Posterior vena cava (tissue), 2 donors: ENCODE measurements at regions of chr1 and their contacts with region 1.

Region 1: GRCh38 chr1:236966636-236967035 is 37.6 kb downstream of the MT1HL1 start:
- DNase-seq: no peak

Region 2: DNA sequence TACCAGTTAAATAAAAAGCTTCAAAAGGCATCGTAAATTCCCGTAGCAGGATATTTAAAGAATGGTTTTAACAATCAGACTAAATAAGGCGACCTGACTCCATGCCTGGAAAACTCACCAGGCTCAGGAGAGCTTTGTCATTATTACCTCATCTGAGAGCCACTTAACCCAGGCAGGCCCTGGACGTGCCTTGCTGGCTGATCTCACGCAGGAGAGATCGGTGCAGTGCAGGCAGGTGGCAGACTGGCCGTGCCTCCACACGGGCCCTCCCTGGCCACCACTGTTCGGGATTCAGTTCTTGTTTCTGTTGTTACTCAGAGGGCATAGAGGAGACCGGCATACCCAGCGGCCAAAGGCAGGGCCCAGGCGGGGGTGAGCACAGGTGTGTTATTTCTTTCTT is 31.2 kb after region 1 on chr1:
- intact Hi-C with region 1: loop called in 1 of 2 experiments (anchors 2 kb)
- DNase-seq: no peak

Region 3: GRCh38 chr1:237197470-237198425 is 231.1 kb after region 1 on chr1:
- intact Hi-C with region 1: no loop called
- DNase-seq: no peak

Region 4: DNA sequence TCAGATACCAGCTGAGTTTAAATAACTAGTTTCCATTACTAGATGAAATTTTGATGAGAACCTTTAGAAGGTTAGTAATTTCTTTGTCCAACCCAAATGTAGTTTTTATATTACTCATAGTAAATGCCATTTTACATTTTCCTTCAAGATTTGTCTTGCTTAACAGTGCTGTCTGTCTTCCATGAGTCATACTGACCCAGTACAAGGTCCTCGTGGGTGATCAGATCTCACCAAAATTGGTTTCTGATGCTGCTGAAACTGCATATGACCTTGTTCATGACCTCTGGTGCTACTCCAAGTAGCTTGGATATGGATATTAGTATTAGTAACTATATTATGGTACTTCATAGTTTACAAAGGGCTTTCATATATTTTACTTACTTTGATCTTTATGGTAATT is 282.5 kb after region 1 on chr1:
- intact Hi-C with region 1: no loop called
- DNase-seq: no peak

Region 5: DNA sequence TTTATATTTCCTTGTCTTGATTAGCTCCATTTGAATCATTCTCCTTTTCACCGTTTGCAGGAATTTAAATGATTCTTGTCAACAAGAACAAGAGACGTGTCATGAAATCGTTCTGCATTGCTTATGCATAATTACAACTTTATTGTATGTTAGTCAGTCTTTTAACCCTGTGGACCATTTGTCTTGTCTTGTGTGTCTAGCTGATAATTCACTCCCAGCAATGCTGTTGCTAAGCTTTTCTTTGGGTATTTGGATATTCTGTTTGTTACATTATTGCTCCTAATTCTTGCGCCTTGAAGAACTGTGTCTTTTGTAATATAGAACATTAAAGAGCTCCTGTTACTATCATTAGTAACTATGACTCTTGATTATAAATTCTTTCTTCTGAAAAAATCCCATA is 387.3 kb after region 1 on chr1:
- intact Hi-C with region 1: no loop called
- DNase-seq: no peak